ENCODE measurements at regions of chr7 and their contacts with region 1.

Region 1: DNA sequence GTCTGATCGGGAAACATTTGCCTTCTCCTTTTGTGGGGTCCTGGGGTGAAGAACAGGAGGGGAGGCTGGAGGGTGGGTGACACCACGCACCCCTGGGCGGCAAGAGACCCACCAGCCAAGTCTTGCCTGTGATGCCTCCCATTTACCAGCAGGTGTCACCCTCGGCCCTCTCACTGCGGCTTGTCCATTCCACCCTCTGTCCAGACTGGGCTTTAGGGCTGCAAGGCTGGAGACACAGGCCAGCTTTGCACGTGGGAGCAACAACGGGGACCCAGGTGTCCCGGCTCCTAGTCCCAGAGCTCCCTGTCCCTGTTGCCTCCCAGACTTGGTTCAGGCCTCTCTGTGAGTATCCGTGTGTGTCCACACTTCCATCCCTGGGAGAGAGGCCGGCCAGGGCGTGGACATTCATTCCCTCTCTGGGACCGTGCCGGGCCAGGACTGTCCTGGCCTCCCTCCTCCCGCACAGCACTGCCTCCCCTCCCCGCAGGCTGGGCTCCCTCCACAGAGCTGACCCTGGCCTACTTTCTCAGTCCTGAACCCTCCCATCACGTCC is 36.2 kb upstream of the GTF2IRD1 start:
- DNase-seq: peak; percentile 44 to 89
- H3K4me3 ChIP-seq: no peak overlapping the region
- H3K27ac ChIP-seq: no peak overlapping the region
- H3K4me1 ChIP-seq: no peaks in the 10 kb centered on the region; a peak in 1 of 7 replicates
- H3K27me3 ChIP-seq: no peaks in the 10 kb centered on the region
- CTCF ChIP-seq: peak; percentile 95 to 98 (median 98)
- EP300 ChIP-seq: no peak
- POLR2A ChIP-seq: no peak
- RAD21 ChIP-seq: peak; percentile 98 to 99

Region 2: DNA sequence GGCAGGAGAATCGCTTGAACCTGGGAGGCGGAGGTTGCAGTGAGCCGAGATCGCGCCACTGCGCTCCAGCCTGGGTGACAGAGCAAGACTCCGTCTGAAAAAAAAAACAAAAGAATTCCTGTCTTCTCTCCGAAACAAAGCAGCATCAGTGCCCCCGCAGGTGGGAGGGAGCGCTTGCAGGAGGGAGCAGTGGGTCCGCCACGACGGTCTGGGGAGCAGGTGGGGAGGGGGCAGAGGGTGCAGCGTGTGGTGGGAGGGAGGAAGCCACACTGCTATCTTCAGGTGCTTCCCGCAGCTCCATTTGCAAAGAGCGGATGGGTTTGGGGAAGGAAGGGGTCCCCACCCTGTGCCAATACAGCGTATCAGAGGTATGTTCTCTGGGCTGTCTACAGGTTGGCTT is 302.2 kb before region 1 on chr7:
- CTCF ChIA-PET with region 1: no interaction called
- POLR2A ChIA-PET with region 1: no interaction called
- DNase-seq: peak in 1 of 2 experiments; percentile 72
- H3K4me3 ChIP-seq: no peak overlapping the region
- H3K27ac ChIP-seq: 0 out of 2 replicates have a peak overlapping the region, but pooled peaks have one; percentile 36
- H3K4me1 ChIP-seq: peaks cover 0 to 3% (median 0%) of the 10 kb centered on the region in 4 experiments; a peak in 1 of 7 replicates
- H3K27me3 ChIP-seq: no peaks in the 10 kb centered on the region
- CTCF ChIP-seq: peak; percentile 35 to 48 (median 43); a peak in 3 of 4 replicates
- EP300 ChIP-seq: no peak
- POLR2A ChIP-seq: no peak
- RAD21 ChIP-seq: peak; percentile 35 to 54; a peak in 3 of 4 replicates

Region 3: GRCh38 chr7:74429153-74429747 is 11.8 kb after region 1 on chr7:
- CTCF ChIA-PET with region 1: interaction called, 55 read pairs
- POLR2A ChIA-PET with region 1: interaction called, 5 read pairs
- DNase-seq: peak in 1 of 2 experiments; percentile 73
- H3K4me3 ChIP-seq: peak overlapping the region in 2 of 4 experiments; percentile 14 to 40; a peak in 4 of 8 replicates
- H3K27ac ChIP-seq: peak overlapping the region; percentile 41; the same call in 1 of the 2 replicates
- H3K4me1 ChIP-seq: peaks cover 5 to 19% (median 14%) of the 10 kb centered on the region in 4 experiments
- H3K27me3 ChIP-seq: no peaks in the 10 kb centered on the region
- CTCF ChIP-seq: no peak
- EP300 ChIP-seq: no peak
- POLR2A ChIP-seq: no peak
- RAD21 ChIP-seq: no peak

Region 4: DNA sequence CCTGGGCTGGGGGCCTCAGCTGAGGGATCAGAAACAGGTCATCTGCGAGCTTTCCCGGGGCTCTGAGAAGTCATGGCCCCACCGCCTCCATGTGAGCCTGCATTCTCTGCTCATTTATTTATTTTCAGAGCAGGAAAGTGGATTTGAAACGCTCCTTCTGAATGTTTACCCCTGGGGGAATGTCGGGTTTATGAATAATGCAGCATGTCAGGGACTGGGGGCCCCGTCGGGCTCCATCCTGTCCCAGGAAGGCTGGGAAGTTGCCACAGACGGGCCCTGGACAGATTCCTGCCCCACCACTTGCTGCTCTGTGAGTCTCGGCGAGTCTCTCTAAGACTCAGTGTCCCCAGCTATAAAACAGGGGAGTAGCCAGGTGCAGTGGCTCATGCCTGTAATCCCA is 24.3 kb after region 1 on chr7:
- CTCF ChIA-PET with region 1: interaction called, 22 read pairs
- POLR2A ChIA-PET with region 1: no interaction called
- DNase-seq: no peak
- H3K4me3 ChIP-seq: no peak overlapping the region
- H3K27ac ChIP-seq: no peak overlapping the region
- H3K4me1 ChIP-seq: peaks cover 0 to 3% (median 0%) of the 10 kb centered on the region in 4 experiments; a peak in 1 of 7 replicates
- H3K27me3 ChIP-seq: no peaks in the 10 kb centered on the region
- CTCF ChIP-seq: no peak
- EP300 ChIP-seq: no peak
- POLR2A ChIP-seq: no peak
- RAD21 ChIP-seq: no peak

Region 5: DNA sequence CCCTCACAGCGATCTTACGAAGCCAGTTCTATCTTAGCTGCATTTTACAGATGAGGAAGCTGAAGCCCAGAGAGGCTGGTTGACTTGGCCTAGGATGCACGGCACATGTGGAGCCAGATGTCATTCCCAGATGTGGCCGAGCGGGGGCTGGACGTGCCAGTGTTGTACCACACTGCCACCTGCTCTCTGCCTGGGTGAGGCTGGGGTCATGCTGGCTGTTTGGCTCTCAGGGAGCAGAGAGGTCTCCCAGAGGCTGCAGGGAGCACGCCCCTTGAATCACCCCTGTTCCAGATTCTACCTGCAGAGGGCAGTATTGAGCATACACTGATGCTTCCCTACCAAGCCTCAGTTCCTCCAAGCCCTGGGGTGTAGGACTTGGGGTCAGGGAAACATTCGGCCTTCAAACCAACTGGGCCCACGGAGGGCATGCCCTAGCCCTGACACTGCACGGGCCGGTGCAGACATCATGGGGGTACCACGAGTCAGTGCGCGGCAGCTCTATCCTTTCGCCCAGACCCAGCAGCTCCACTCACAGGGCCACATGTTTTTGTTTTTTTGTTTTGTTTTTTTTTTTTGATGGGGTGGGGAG is 32.4 kb after region 1 on chr7:
- CTCF ChIA-PET with region 1: interaction called, 19 read pairs
- POLR2A ChIA-PET with region 1: no interaction called
- DNase-seq: peak; percentile 82 to 97
- H3K4me3 ChIP-seq: no peak overlapping the region
- H3K27ac ChIP-seq: no peak overlapping the region
- H3K4me1 ChIP-seq: peaks cover 0 to 9% (median 5%) of the 10 kb centered on the region in 4 experiments; a peak in 6 of 7 replicates
- H3K27me3 ChIP-seq: no peaks in the 10 kb centered on the region
- CTCF ChIP-seq: peak; percentile 66 to 95 (median 86)
- EP300 ChIP-seq: no peak
- POLR2A ChIP-seq: no peak
- RAD21 ChIP-seq: peak; percentile 69 to 72

Region 6: DNA sequence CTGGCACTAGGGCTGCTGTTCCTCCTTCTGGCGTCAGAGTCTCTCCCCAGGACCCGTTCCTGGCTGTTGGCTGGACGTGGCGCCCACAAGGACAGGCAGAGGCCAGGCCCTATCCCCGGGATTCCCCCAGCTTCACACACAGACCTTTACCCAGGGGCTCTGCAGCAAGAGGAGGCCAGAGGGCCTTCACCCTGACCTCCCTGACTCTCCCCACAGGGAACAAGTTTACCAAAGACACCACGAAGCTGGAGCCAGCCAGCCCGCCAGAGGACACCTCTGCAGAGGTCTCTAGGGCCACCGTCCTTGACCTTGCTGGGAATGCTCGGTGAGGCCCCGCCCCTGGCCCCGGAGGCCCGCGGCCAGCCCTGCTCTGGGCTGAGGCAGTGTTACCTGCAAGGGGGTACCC is 118.5 kb after region 1 on chr7:
- CTCF ChIA-PET with region 1: interaction called, 15 read pairs
- POLR2A ChIA-PET with region 1: interaction called, 4 read pairs
- DNase-seq: no peak
- H3K4me3 ChIP-seq: no peak overlapping the region
- H3K27ac ChIP-seq: no peak overlapping the region
- H3K4me1 ChIP-seq: no peaks in the 10 kb centered on the region
- H3K27me3 ChIP-seq: no peaks in the 10 kb centered on the region
- CTCF ChIP-seq: no peak
- EP300 ChIP-seq: no peak
- POLR2A ChIP-seq: no peak
- RAD21 ChIP-seq: no peak

Region 7: GRCh38 chr7:74544706-74545469 is 127.4 kb after region 1 on chr7:
- CTCF ChIA-PET with region 1: interaction called, 14 read pairs
- POLR2A ChIA-PET with region 1: interaction called, 3 read pairs
- DNase-seq: peak; percentile 50 to 67
- H3K4me3 ChIP-seq: no peak overlapping the region
- H3K27ac ChIP-seq: no peak overlapping the region
- H3K4me1 ChIP-seq: peaks cover 0 to 2% (median 0%) of the 10 kb centered on the region in 4 experiments; a peak in 1 of 7 replicates
- H3K27me3 ChIP-seq: no peaks in the 10 kb centered on the region
- CTCF ChIP-seq: peak; percentile 79 to 87 (median 85)
- EP300 ChIP-seq: no peak
- POLR2A ChIP-seq: no peak
- RAD21 ChIP-seq: peak; percentile 78 to 81

Region 8: DNA sequence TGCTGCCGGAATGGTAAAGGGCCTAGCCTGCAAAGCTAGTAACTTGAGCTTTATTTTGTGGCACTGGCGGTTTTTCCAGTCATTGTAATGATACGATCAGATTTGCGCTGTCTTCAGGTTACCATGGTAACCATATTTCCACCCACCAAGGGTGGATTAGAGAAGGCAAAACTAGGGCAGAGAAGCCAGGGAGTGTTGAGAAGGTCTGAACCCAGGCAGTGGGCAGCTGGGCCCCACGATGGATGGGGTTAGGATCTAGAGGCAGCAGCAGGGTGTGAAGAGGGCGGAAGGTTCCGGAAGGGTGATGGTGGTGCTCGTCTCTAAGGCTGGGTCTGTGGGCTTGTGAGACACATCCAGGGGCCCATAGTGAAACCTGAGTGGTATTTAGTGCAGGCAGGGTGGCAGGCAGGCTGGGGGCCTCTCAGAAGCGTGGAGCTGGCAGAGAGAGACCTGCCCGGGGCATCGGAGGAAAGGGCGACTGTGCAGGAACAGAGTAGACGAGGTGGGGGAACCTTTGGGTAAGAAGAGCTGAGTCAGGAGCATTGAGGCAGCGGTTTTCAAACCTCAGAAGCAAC is 152.1 kb after region 1 on chr7:
- CTCF ChIA-PET with region 1: interaction called, 66 read pairs
- POLR2A ChIA-PET with region 1: interaction called, 4 read pairs
- DNase-seq: no peak
- H3K4me3 ChIP-seq: no peak overlapping the region
- H3K27ac ChIP-seq: no peak overlapping the region
- H3K4me1 ChIP-seq: 0 out of 7 replicates have a peak, but pooled peaks cover 0 to 5% (median 0%) of the 10 kb centered on the region in 4 experiments
- H3K27me3 ChIP-seq: no peaks in the 10 kb centered on the region
- CTCF ChIP-seq: no peak
- EP300 ChIP-seq: no peak
- POLR2A ChIP-seq: no peak
- RAD21 ChIP-seq: no peak

Measured in H1 (cell line).